ENCODE measurements at regions of chr3 and their contacts with region 1.

Region 1: DNA sequence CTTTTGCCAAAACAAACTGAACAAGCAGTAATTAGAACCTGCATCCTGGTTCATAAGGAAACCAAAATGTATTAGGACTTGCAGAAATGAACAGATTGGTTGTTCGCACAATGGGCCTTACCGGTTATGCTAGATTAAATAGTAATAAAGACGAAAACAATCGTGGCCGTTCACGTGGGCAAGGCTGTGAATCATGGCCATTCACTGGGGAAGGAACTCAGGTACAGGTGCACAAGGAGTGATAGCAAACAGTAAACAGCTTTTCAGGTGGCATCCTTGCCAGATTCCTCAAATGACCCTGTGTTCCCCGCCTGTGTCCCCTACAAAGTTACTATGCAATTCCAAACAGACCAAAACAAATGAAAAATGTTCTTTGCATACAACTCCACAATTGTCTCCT is 8.2 kb downstream of the LRIG1 start:
- DNase-seq: no peak
- H3K4me3 Mint-ChIP-seq: no peak overlapping the region
- H3K27ac Mint-ChIP-seq: no peak overlapping the region
- H3K4me1 Mint-ChIP-seq: peaks cover 81% of the 10 kb centered on the region
- H3K27me3 Mint-ChIP-seq: peaks cover 2% of the 10 kb centered on the region

Region 2: GRCh38 chr3:66480666-66481065 is 12.0 kb before region 1 on chr3:
- CTCF ChIA-PET with region 1: interaction called, 14 read pairs
- intact Hi-C with region 1: loop called (anchors 1 kb)
- DNase-seq: peak; percentile 70
- H3K4me3 Mint-ChIP-seq: peak overlapping the region; percentile 44
- H3K27ac Mint-ChIP-seq: peak overlapping the region; percentile 81
- H3K4me1 Mint-ChIP-seq: peaks cover 74% of the 10 kb centered on the region
- H3K27me3 Mint-ChIP-seq: no peaks in the 10 kb centered on the region

Measured in activated naive CD4-positive, alpha-beta T cell treated with anti-CD3 and anti-CD28 coated beads for 36 hours (primary cell).